PC-9 (cell line): ENCODE measurements at regions of chrX and their contacts with region 1.

Region 1: GRCh38 chrX:129905787-129906580 is at the start of gene UTP14A:
- DNase-seq: peak; percentile 89 to 93
- H3K4me3 ChIP-seq: peak within 1 kb of the TSS; percentile 91
- H3K27ac ChIP-seq: peak within 1 kb of the TSS; percentile 72
- H3K4me1 ChIP-seq: peaks cover 22% of the 10 kb centered on the region
- H3K27me3 ChIP-seq: no peaks in the 10 kb centered on the region
- CTCF ChIP-seq: no peak
- total RNA-seq, gene UTP14A: 44.6 and 55.4 TPM in 2 replicates

Region 2: GRCh38 chrX:129759576-129760061 is 146.4 kb before region 1 on chrX:
- CTCF ChIA-PET with region 1: interaction called, 8 read pairs
- POLR2A ChIA-PET with region 1: no interaction called
- intact Hi-C with region 1: loop called (anchors 10 kb)
- DNase-seq: peak in 1 of 2 experiments; percentile 63
- H3K4me3 ChIP-seq: no peak overlapping the region
- H3K27ac ChIP-seq: no peak overlapping the region
- H3K4me1 ChIP-seq: no peaks in the 10 kb centered on the region
- H3K27me3 ChIP-seq: no peaks in the 10 kb centered on the region
- CTCF ChIP-seq: no peak

Region 3: GRCh38 chrX:129843459-129844306 is 62.3 kb before region 1 on chrX and contains the start of gene ZDHHC9:
- CTCF ChIA-PET with region 1: no interaction called
- POLR2A ChIA-PET with region 1: interaction called, 6 read pairs
- intact Hi-C with region 1: loop called (anchors 1 kb)
- DNase-seq: peak; percentile 86 to 96
- H3K4me3 ChIP-seq: peak within 1 kb of the TSS; percentile 90
- H3K27ac ChIP-seq: peak within 1 kb of the TSS; percentile 97
- H3K4me1 ChIP-seq: peaks cover 52% of the 10 kb centered on the region
- H3K27me3 ChIP-seq: no peaks in the 10 kb centered on the region
- CTCF ChIP-seq: 0 out of 2 replicates have a peak, but pooled peaks have one; percentile 25
- total RNA-seq, gene ZDHHC9: 84.2 and 108 TPM in 2 replicates

Region 4: GRCh38 chrX:129876771-129877305 is 29.1 kb before region 1 on chrX:
- CTCF ChIA-PET with region 1: no interaction called
- POLR2A ChIA-PET with region 1: no interaction called
- intact Hi-C with region 1: loop called (anchors 1 kb)
- DNase-seq: peak; percentile 53 to 95
- H3K4me3 ChIP-seq: no peak overlapping the region
- H3K27ac ChIP-seq: peak overlapping the region; percentile 82
- H3K4me1 ChIP-seq: peaks cover 26% of the 10 kb centered on the region
- H3K27me3 ChIP-seq: no peaks in the 10 kb centered on the region
- CTCF ChIP-seq: no peak

Region 5: DNA sequence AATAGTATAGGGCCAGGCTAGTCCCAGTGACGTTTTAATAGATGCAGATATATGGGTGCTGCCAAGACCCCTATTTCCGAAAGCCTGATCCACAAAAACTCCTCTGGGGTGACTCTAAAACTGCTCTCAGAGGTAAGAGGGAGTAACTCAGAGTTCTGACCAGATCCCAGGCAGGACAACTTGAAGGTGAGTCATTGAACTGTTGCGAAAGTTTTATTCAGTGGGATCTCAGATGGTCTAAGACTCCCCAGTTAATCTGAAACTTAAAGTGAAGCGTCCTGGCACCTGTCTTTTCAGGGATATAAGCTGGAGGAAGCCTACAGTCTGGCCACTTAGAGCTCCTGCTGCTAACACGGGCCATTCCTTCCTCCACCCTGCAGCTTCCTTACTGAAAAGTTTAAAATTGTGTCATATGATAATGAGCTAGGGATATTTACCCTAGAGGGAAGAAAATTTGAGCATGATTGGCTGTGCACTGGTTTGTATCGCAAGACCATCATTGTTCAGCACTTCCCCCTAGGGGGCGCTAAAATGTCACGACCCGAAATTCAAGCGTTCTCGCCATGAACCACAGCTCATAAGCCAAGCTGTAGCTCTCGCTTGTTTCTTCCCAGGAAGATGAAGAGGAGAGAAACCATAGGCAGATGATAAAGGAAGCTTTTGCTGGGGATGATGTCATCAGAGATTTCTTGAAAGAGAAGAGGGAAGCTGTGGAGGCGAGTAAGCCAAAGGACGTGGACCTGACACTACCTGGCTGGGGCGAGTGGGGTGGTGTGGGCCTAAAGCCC is 19.5 kb after region 1 on chrX:
- CTCF ChIA-PET with region 1: interaction called, 11 read pairs
- POLR2A ChIA-PET with region 1: no interaction called
- intact Hi-C with region 1: no loop called
- DNase-seq: peak; percentile 63 to 64
- H3K4me3 ChIP-seq: no peak overlapping the region
- H3K27ac ChIP-seq: peak overlapping the region; percentile 27
- H3K4me1 ChIP-seq: peaks cover 10% of the 10 kb centered on the region
- H3K27me3 ChIP-seq: no peaks in the 10 kb centered on the region
- CTCF ChIP-seq: peak; percentile 83

Region 6: DNA sequence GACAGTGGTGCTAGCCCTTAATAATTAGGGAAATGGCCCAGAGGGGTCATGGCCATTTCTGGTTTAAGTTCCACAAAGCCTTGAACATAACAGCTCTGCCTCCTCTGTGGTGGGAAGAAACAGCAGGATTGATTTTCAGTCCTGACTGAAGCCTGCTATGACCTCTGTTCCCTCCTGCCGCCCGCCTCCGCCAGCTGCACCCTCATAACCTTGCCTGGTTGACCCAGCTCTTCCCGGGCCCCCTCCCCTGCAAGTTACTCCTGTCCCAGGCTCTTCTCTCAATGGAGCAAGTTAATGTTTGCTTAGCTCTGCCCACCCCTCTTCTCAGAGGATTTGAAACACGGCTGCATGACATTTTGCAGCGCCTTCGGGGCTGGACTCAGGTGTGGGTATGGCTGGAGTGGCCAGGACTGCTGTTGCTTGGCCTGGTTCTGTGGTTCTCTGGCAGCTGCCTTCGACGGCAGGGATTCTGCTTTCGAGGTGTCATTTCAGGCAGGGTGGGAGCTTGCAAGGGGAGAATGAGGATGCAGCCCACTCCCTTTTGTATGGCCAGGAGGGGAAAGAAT is 103.8 kb after region 1 on chrX:
- CTCF ChIA-PET with region 1: no interaction called
- POLR2A ChIA-PET with region 1: no interaction called
- intact Hi-C with region 1: no loop called
- DNase-seq: no peak
- H3K4me3 ChIP-seq: no peak overlapping the region
- H3K27ac ChIP-seq: no peak overlapping the region
- H3K4me1 ChIP-seq: no peaks in the 10 kb centered on the region
- H3K27me3 ChIP-seq: no peaks in the 10 kb centered on the region
- CTCF ChIP-seq: no peak